IMR-90 (cell line): ENCODE measurements at regions of chr1 and their contacts with region 1.

Region 1: GRCh38 chr1:184664042-184664655 is 90.5 kb downstream of the EDEM3 start:
- DNase-seq: peak; percentile 57
- ATAC-seq: peak; percentile 98
- H3K4me3 ChIP-seq: 0 out of 2 replicates have a peak overlapping the region, but pooled peaks have one; percentile 12
- H3K27ac ChIP-seq: no peak overlapping the region
- H3K4me1 ChIP-seq: no peaks in the 10 kb centered on the region
- H3K27me3 ChIP-seq: peaks cover 13% of the 10 kb centered on the region
- CTCF ChIP-seq: peak; percentile 81
- POLR2A ChIP-seq: no peak
- RAD21 ChIP-seq: peak; percentile 90

Region 2: GRCh38 chr1:183655562-183656075 is 1008.5 kb before region 1 on chr1:
- CTCF ChIA-PET with region 1: no interaction called
- POLR2A ChIA-PET with region 1: no interaction called
- dilution Hi-C with region 1: no loop called
- in situ Hi-C with region 1: loop called (anchors 25 kb)
- intact Hi-C with region 1: no loop called
- DNase-seq: peak; percentile 84
- ATAC-seq: peak; percentile 96
- H3K4me3 ChIP-seq: no peak overlapping the region
- H3K27ac ChIP-seq: no peak overlapping the region
- H3K4me1 ChIP-seq: peaks cover 6% of the 10 kb centered on the region
- H3K27me3 ChIP-seq: no peaks in the 10 kb centered on the region
- CTCF ChIP-seq: peak; percentile 92
- POLR2A ChIP-seq: 0 out of 2 replicates have a peak, but pooled peaks have one; percentile 32
- RAD21 ChIP-seq: peak; percentile 92

Region 3: DNA sequence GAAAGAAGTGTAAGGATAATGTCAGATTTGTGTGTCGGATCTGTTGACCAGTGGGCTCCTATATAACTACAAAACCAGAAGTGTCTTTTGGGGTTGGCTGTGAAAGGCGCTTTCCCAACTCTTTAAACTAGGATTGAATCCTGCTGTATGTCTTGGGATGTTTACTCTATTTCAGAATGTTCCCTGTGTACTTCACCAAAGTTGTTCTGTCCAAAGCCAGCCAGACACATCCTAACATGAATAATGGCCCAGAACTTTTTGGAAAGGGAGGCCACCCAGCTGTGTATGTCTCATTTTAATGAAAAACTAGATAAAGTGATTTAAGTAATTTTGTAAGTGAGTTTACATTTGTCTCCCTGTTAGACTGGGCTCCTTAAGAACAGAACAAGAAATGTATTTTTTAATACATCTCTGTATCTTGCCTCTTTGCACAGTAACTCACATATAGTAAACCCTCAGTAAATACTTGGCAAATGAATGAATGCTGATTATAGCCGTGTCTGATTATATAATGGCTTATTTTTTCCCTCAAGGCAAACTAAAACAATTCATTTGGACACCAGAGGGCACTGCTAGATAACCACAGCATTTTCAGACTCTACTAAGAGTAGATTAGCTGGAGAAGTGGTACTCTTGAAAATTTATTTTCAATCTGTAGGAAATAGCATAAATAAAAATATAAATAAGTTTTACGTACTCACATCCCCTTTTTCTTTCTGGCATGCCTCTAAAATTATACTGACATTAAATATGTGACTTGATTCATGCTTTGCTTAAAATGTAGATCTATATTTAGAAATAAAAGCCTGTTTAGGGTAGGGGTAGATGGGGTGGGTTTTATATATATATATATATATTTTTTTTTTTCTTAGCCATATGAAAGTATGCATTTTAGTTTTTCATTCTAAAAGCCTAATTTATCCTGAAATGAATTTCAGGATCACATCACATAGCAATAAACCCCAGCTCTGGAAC is 588.8 kb before region 1 on chr1:
- CTCF ChIA-PET with region 1: interaction called, 3 read pairs
- POLR2A ChIA-PET with region 1: no interaction called
- dilution Hi-C with region 1: no loop called
- in situ Hi-C with region 1: loop called (anchors 5 kb)
- intact Hi-C with region 1: loop called (anchors 1 kb)
- DNase-seq: peak; percentile 75
- ATAC-seq: peak; percentile 87
- H3K4me3 ChIP-seq: no peak overlapping the region
- H3K27ac ChIP-seq: no peak overlapping the region
- H3K4me1 ChIP-seq: peaks cover 3% of the 10 kb centered on the region; the same call in 1 of the 2 replicates
- H3K27me3 ChIP-seq: no peaks in the 10 kb centered on the region
- CTCF ChIP-seq: peak; percentile 91
- POLR2A ChIP-seq: peak; percentile 26; the same call in 1 of the 2 replicates
- RAD21 ChIP-seq: peak; percentile 98

Region 4: DNA sequence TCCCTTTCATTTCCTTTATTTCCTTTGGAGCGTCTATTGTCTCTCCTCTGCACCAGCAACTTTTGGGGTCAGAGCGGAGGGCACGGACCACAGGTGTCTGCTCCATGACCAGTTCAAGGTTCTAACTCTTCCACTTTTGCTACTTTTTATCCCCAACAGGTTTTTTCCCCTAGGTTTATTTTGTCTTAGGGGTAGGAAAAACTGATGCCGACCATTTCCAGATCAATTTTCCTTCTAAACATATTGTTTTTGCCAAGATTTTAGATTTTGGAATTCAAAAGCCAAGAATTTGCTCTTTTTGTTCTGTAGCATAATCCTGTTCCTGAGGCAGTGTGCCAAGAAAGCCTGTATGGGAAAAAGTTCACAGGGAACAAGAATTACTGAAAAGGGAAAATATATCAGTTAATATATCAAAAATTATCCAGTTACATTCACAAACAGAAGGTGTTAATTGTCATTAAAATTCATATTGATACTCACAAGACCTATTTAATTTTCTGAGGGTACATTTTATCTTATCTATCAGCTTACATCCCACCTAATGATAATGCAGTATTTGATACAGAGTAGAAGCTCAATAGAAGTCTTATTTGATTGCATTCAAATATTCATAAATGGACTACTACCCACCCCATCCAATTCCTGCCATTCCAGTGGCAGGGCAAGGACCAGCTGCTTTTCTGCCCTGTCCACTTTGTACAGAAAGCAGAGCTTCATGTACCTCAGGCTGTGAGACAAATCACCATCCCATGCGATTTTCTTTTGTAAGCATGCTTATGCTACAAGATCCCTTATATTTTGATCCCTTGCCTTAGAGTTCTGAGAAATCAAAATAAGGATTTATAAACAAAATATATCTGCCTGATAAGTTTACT is 581.4 kb before region 1 on chr1:
- CTCF ChIA-PET with region 1: no interaction called
- POLR2A ChIA-PET with region 1: no interaction called
- dilution Hi-C with region 1: no loop called
- in situ Hi-C with region 1: loop called (anchors 5 kb)
- intact Hi-C with region 1: no loop called
- DNase-seq: no peak
- ATAC-seq: no peak
- H3K4me3 ChIP-seq: no peak overlapping the region
- H3K27ac ChIP-seq: no peak overlapping the region
- H3K4me1 ChIP-seq: 0 out of 2 replicates have a peak, but pooled peaks cover 2% of the 10 kb centered on the region
- H3K27me3 ChIP-seq: no peaks in the 10 kb centered on the region
- CTCF ChIP-seq: no peak
- POLR2A ChIP-seq: no peak
- RAD21 ChIP-seq: no peak

Region 5: DNA sequence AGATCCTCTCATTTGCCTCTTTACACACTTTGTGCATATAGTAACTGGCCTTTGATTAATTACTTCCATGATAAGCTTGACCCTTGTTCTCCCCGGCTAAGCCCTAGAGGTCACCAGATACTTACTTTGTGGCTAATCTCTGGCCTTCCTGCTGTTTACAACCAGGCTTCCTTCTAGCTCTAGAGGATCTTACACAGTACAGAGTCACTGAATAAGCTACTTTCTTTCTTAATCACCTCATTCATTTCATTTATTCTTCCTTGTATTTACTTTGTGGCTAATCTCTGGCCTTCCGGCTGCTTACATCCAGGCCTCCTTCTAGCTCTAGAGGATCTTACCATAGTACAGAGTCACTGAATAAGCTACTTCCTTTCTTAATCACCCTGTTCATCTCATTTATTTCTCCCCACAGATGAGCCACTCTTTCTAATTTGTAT is 421.6 kb before region 1 on chr1:
- CTCF ChIA-PET with region 1: interaction called, 12 read pairs
- POLR2A ChIA-PET with region 1: no interaction called
- dilution Hi-C with region 1: no loop called
- in situ Hi-C with region 1: no loop called
- intact Hi-C with region 1: loop called (anchors 1 kb)
- DNase-seq: peak; percentile 91
- ATAC-seq: peak; percentile 98
- H3K4me3 ChIP-seq: no peak overlapping the region
- H3K27ac ChIP-seq: no peak overlapping the region
- H3K4me1 ChIP-seq: 0 out of 2 replicates have a peak, but pooled peaks cover 2% of the 10 kb centered on the region
- H3K27me3 ChIP-seq: peaks cover 41% of the 10 kb centered on the region
- CTCF ChIP-seq: peak; percentile 26; the same call in 1 of the 2 replicates
- POLR2A ChIP-seq: no peak
- RAD21 ChIP-seq: peak; percentile 28; the same call in 1 of the 2 replicates

Region 6: GRCh38 chr1:184386312-184387068 is 277.7 kb before region 1 on chr1 and contains the start of gene C1orf21:
- CTCF ChIA-PET with region 1: interaction called, 6 read pairs
- POLR2A ChIA-PET with region 1: no interaction called
- dilution Hi-C with region 1: no loop called
- in situ Hi-C with region 1: no loop called
- intact Hi-C with region 1: loop called (anchors 2 kb)
- DNase-seq: peak; percentile 84
- ATAC-seq: peak; percentile 96
- H3K4me3 ChIP-seq: peak within 1 kb of the TSS; percentile 61
- H3K27ac ChIP-seq: peak within 1 kb of the TSS; percentile 60
- H3K4me1 ChIP-seq: peaks cover 4% of the 10 kb centered on the region; the same call in 1 of the 2 replicates
- H3K27me3 ChIP-seq: peaks cover 7% of the 10 kb centered on the region
- CTCF ChIP-seq: no peak
- POLR2A ChIP-seq: no peak; the same call in 1 of the 2 replicates
- RAD21 ChIP-seq: no peak
- total RNA-seq, gene C1orf21: 9.9 and 15.8 TPM in 2 replicates

Region 7: GRCh38 chr1:184563308-184563707 is 100.8 kb before region 1 on chr1:
- CTCF ChIA-PET with region 1: interaction called, 4 read pairs
- POLR2A ChIA-PET with region 1: no interaction called
- dilution Hi-C with region 1: no loop called
- in situ Hi-C with region 1: no loop called
- intact Hi-C with region 1: loop called (anchors 5 kb)
- DNase-seq: peak; percentile 40
- ATAC-seq: peak; percentile 42; the same call in 1 of the 2 replicates
- H3K4me3 ChIP-seq: no peak overlapping the region
- H3K27ac ChIP-seq: no peak overlapping the region
- H3K4me1 ChIP-seq: peaks cover 3% of the 10 kb centered on the region; the same call in 1 of the 2 replicates
- H3K27me3 ChIP-seq: no peaks in the 10 kb centered on the region
- CTCF ChIP-seq: peak; percentile 66
- POLR2A ChIP-seq: no peak
- RAD21 ChIP-seq: peak; percentile 65

Region 8: DNA sequence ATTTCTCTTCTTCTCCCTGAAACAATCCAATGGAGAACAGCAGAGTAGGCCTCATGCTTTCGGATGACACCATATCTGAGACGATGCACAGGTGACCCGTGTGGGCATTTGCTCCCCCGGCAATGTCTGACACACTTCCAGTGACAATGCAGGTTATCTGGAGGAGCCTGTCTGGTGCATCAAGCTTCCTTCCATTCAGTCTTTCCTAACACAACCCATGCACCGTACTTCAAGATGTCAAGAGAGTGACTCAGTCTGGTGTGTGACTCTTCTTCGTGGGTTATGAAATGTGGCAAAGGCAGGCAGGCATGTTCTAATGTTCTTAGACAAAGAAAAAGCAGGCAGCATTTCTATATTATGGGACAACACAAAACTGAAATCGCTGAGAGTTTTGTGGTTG is 68.6 kb before region 1 on chr1:
- CTCF ChIA-PET with region 1: no interaction called
- POLR2A ChIA-PET with region 1: no interaction called
- dilution Hi-C with region 1: no loop called
- in situ Hi-C with region 1: no loop called
- intact Hi-C with region 1: no loop called
- DNase-seq: peak; percentile 85
- ATAC-seq: peak; percentile 90
- H3K4me3 ChIP-seq: no peak overlapping the region
- H3K27ac ChIP-seq: no peak overlapping the region
- H3K4me1 ChIP-seq: peaks cover 8% of the 10 kb centered on the region
- H3K27me3 ChIP-seq: no peaks in the 10 kb centered on the region
- CTCF ChIP-seq: no peak
- POLR2A ChIP-seq: no peak
- RAD21 ChIP-seq: no peak